CD4-positive, alpha-beta memory T cell (primary cell): ENCODE measurements at regions of chr20 and their contacts with region 1.

Region 1: DNA sequence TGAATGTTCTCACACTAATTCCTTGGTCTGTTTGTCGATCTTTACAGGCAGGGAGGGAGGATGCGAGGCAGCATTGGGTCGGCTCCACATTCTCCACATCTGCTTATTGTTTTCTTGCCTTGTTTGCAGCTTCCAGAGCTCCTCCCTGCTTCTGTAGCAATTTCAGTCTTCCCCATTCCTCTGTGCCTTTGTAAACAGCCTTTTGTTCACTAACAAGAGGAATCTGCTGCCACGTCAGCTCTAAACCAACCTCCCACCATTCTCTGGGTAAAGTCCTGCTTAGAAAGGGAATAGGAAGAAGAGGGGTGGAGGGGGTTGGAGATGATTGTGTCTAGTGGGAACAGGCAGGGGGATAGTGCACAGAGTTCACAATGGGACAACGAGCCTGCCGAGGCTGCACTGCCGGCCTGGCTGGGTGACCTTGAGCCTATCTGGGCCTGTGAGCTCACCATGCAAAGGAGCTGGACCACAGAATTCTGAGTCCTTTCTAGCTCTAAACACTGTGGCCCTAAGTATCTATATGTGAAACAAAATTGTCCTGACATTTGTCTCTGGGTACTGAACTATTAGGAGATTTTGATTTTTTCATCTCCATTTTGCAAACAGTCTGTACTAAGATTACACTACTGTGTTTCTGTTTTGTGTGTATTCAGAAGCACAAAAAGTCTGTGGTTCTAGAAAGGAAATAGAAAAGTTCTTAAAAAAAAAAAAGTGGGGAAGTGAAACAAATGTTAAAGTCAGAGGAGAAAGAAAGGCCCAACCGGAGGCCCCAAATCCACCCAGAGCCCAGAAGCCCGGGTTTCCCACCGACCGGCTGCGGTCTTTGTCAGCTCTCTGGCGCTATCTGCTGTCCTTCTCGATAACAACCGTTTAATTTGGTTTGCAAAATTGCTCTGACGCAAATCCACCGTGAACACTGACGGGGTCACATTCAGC is 1.4 kb upstream of the PRND start:
- DNase-seq: peak; percentile 75 to 78 (median 77)
- H3K4me3 ChIP-seq: no peak overlapping the region
- H3K4me3 Mint-ChIP-seq: peak overlapping the region in 1 of 8 donors; percentile 50
- H3K27ac ChIP-seq: no peak overlapping the region
- H3K27ac Mint-ChIP-seq: peak overlapping the region in 5 of 7 donors; percentile 14 to 87 (median 65)
- H3K4me1 ChIP-seq: peaks cover 10% of the 10 kb centered on the region
- H3K4me1 Mint-ChIP-seq: peaks cover 4 to 9% (median 7%) of the 10 kb centered on the region in 4 donors
- H3K27me3 ChIP-seq: no peaks in the 10 kb centered on the region
- H3K27me3 Mint-ChIP-seq: no peaks in the 10 kb centered on the region

Region 2: DNA sequence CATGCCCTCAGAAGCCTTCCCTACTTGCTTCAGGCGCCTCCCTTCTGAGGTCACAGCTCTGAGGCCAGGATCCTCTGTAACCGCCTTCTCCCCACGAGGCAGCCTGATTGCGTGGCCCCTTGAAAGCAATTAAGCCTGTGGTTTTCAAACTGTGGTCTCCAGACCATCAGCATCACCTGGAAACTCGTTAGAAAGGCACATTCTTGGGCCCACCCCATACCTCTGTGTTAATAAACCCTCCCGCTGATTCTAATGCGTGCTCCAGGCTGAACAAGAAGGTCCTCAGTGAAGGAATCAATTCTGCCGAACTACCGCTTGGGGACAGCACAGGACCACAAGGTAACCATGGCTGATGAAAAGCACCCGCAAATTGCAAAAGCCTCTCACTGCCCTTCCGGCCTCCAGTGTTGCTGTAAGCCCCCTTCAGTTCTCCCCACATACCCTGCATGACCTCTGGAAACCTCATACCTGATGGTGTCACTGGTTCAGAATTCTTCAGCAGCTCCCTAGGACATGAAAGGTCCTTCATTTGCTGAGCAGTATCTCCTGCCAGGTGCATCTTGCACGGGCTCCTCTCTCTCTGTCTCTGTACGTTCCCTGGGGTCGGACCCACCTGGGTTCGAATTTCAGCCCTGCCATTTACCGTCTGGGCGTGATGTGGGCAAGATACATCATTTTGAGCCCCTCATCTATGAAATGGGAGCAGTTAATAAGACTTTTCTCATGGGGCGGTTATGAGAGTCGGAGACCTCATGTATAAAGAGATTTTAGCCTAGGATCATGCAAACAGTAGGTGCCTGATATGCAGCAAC is 611.6 kb before region 1 on chr20:
- CTCF ChIA-PET with region 1: no interaction called
- POLR2A ChIA-PET with region 1: no interaction called
- intact Hi-C with region 1: loop called (anchors 1 kb)
- DNase-seq: peak; percentile 60 to 67 (median 63)
- H3K4me3 ChIP-seq: no peak overlapping the region
- H3K4me3 Mint-ChIP-seq: no peak overlapping the region
- H3K27ac ChIP-seq: no peak overlapping the region
- H3K27ac Mint-ChIP-seq: no peak overlapping the region
- H3K4me1 ChIP-seq: no peaks in the 10 kb centered on the region
- H3K4me1 Mint-ChIP-seq: peaks cover 0 to 6% (median 1%) of the 10 kb centered on the region in 4 donors
- H3K27me3 ChIP-seq: no peaks in the 10 kb centered on the region
- H3K27me3 Mint-ChIP-seq: peaks cover 2 to 13% of the 10 kb centered on the region in 2 donors

Region 3: DNA sequence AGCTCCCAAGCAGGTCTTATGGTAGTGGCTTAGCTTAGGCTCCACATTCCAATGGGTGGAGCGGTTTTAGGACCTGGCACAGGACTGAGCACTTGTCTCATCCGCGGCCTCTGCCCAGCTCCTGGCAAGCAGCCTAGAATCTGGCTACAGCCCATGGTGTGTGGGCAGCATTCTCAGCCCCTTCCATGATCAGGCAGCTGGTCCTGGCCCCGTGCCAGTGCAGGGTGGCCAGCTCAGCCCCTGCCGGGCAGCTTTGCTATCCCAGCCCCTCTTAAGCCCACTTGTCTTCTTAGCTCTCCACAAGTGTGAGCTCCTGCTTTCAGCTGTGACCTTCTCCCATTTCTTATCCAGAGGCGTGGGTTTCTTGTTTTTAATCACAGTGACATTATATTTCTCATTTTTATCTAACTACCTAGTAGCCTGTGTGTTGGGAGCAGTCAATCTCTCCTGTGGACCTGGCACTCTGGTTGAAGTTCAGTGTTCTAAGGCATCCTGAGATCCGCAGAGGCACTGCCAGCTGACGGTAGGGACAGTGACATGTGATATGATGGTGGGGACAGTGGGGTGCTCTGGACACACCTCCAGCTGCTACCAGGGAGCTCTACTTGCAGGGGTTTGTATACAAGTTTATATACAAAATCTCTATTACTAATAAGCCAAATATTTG is 118.5 kb before region 1 on chr20:
- CTCF ChIA-PET with region 1: interaction called, 369 read pairs
- POLR2A ChIA-PET with region 1: no interaction called
- intact Hi-C with region 1: no loop called
- DNase-seq: peak in 1 of 5 donors; percentile 26
- H3K4me3 ChIP-seq: no peak overlapping the region
- H3K4me3 Mint-ChIP-seq: no peak overlapping the region
- H3K27ac ChIP-seq: no peak overlapping the region
- H3K27ac Mint-ChIP-seq: no peak overlapping the region
- H3K4me1 ChIP-seq: no peaks in the 10 kb centered on the region
- H3K4me1 Mint-ChIP-seq: no peaks in the 10 kb centered on the region
- H3K27me3 ChIP-seq: peaks cover 5% of the 10 kb centered on the region
- H3K27me3 Mint-ChIP-seq: peaks cover 15 to 30% of the 10 kb centered on the region in 2 donors

Region 4: GRCh38 chr20:4607287-4607713 is 113.0 kb before region 1 on chr20:
- CTCF ChIA-PET with region 1: interaction called, 369 read pairs
- POLR2A ChIA-PET with region 1: no interaction called
- intact Hi-C with region 1: loop called (anchors 1 kb)
- DNase-seq: peak; percentile 65 to 69 (median 66)
- H3K4me3 ChIP-seq: no peak overlapping the region
- H3K4me3 Mint-ChIP-seq: no peak overlapping the region
- H3K27ac ChIP-seq: no peak overlapping the region
- H3K27ac Mint-ChIP-seq: peak overlapping the region in 2 of 7 donors; percentile 67 to 77
- H3K4me1 ChIP-seq: no peaks in the 10 kb centered on the region
- H3K4me1 Mint-ChIP-seq: peaks cover 0 to 5% (median 2%) of the 10 kb centered on the region in 4 donors
- H3K27me3 ChIP-seq: peaks cover 5% of the 10 kb centered on the region
- H3K27me3 Mint-ChIP-seq: peaks cover 11 to 16% of the 10 kb centered on the region in 2 donors

Region 5: GRCh38 chr20:4613718-4614620 is 106.3 kb before region 1 on chr20:
- CTCF ChIA-PET with region 1: interaction called, 369 read pairs
- POLR2A ChIA-PET with region 1: interaction called, 10 read pairs
- intact Hi-C with region 1: loop called (anchors 1 kb)
- DNase-seq: peak; percentile 63 to 76 (median 67)
- H3K4me3 ChIP-seq: no peak overlapping the region
- H3K4me3 Mint-ChIP-seq: peak overlapping the region in 2 of 8 donors; percentile 6 to 64
- H3K27ac ChIP-seq: no peak overlapping the region
- H3K27ac Mint-ChIP-seq: peak overlapping the region in 4 of 7 donors; percentile 52 to 85 (median 66)
- H3K4me1 ChIP-seq: peaks cover 3% of the 10 kb centered on the region
- H3K4me1 Mint-ChIP-seq: peaks cover 4 to 8% (median 6%) of the 10 kb centered on the region in 4 donors
- H3K27me3 ChIP-seq: no peaks in the 10 kb centered on the region
- H3K27me3 Mint-ChIP-seq: peaks cover 0 to 2% of the 10 kb centered on the region in 2 donors

Region 6: DNA sequence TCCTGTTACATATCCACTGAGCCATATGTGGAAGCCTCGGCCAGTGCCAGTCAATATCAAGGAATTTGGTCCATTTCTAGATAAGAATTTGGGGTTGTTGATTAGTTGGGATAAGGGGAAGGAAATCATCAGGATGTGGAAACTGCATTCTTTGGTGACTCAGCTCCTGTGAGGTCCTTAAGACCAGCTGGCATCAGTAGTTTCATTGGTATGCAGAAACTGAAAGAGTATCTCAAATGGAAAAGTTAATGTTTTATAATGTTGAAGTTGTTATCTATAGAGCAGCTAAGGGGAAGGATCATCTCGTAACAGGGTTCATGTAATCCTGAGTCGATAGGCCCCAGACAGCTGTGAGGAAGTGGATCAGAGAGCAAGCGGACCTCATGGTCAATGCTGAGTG is 86.5 kb before region 1 on chr20:
- CTCF ChIA-PET with region 1: interaction called, 10 read pairs
- POLR2A ChIA-PET with region 1: no interaction called
- intact Hi-C with region 1: no loop called
- DNase-seq: no peak
- H3K4me3 ChIP-seq: no peak overlapping the region
- H3K4me3 Mint-ChIP-seq: no peak overlapping the region
- H3K27ac ChIP-seq: no peak overlapping the region
- H3K27ac Mint-ChIP-seq: no peak overlapping the region
- H3K4me1 ChIP-seq: no peaks in the 10 kb centered on the region
- H3K4me1 Mint-ChIP-seq: peaks cover 0 to 2% (median 0%) of the 10 kb centered on the region in 4 donors
- H3K27me3 ChIP-seq: no peaks in the 10 kb centered on the region
- H3K27me3 Mint-ChIP-seq: peaks cover 0 to 3% of the 10 kb centered on the region in 2 donors